Panc1 (cell line): ENCODE measurements at regions of chr3 and their contacts with region 1.

Region 1: GRCh38 chr3:100231668-100232067 is 29.1 kb upstream of the TBC1D23 start:
- DNase-seq: no peak
- ATAC-seq: no peak
- H3K4me3 ChIP-seq: no peak overlapping the region
- H3K27ac ChIP-seq: no peak overlapping the region
- H3K4me1 ChIP-seq: no peaks in the 10 kb centered on the region
- H3K27me3 ChIP-seq: no peaks in the 10 kb centered on the region
- CTCF ChIP-seq: no peak

Region 2: DNA sequence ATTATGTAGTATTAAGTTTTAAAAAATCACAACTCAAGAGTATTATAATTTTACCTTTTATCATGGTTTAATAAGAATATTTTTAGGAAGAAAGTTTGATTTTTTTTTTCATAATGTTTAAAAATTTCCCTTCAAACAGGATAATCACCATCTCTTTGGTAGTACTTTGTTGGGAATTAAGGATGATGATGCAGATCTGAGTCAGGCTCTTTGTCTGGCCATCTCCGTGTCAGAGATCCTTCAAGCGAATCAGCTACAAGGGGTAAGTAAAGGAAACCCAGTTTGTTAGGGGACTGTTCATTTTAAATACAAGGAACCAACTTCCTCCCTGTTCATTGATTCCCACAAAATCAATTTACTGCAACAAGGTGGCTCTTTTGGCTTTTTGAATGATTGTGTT is 66.1 kb after region 1 on chr3:
- CTCF ChIA-PET with region 1: no interaction called
- POLR2A ChIA-PET with region 1: interaction called, 10 read pairs
- in situ Hi-C with region 1: no loop called
- intact Hi-C with region 1: no loop called
- DNase-seq: no peak
- ATAC-seq: no peak
- H3K4me3 ChIP-seq: no peak overlapping the region
- H3K27ac ChIP-seq: no peak overlapping the region
- H3K4me1 ChIP-seq: no peaks in the 10 kb centered on the region
- H3K27me3 ChIP-seq: no peaks in the 10 kb centered on the region
- CTCF ChIP-seq: no peak